Tibial artery (tissue), 4 donors: ENCODE measurements at regions of chr2 and their contacts with region 1.

Region 1: DNA sequence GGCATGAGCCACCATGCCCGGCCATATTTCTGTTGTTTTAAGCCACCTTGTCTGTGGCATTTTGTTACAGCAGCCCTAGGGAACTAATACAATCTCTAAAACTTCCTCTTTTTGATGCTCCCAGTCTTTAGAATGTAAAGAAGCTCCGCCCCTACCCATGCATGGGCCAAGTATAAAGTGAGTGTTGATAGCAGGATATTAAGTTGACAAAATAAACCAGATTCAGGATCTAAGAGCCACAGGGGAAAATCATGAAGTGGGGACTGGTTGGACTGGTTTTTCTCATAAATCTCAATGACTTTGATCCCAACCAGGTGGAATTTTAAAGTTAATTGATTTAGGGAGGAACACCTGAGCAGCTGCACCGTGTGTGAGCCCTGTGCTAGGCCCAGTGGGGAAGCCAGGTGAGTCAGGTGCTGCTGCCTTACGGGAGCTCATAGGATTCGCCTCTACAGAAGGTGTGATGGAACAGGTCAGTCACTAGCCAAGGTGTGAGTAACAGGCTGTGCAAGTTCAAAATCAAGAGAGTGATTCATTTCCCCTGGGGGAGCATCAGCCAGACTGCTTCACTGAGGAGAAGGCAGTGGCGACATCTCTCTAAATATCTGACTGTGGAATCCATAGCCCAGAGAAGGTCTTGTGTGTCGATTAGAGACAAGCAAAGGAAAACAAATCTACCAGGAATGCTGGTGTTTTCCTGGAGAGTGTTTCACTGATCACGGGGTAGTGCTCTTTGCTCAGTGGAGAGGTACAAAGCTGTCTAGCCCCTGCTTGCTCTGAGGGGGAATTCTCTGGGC is 63.0 kb upstream of the MSH2 start:
- DNase-seq: no peak
- H3K4me3 ChIP-seq: no peak overlapping the region
- H3K27ac ChIP-seq: no peak overlapping the region
- H3K4me1 ChIP-seq: peaks cover 0 to 9% (median 4%) of the 10 kb centered on the region in 4 donors
- H3K27me3 ChIP-seq: peaks cover 0 to 9% of the 10 kb centered on the region in 2 donors
- CTCF ChIP-seq: no peak

Region 2: GRCh38 chr2:47386551-47386950 is 46.6 kb after region 1 on chr2:
- intact Hi-C with region 1: loop called (anchors 5 kb)
- DNase-seq: no peak
- H3K4me3 ChIP-seq: no peak overlapping the region
- H3K27ac ChIP-seq: no peak overlapping the region
- H3K4me1 ChIP-seq: no peaks in the 10 kb centered on the region
- H3K27me3 ChIP-seq: peaks cover 0 to 3% of the 10 kb centered on the region in 2 donors
- CTCF ChIP-seq: no peak

Region 3: DNA sequence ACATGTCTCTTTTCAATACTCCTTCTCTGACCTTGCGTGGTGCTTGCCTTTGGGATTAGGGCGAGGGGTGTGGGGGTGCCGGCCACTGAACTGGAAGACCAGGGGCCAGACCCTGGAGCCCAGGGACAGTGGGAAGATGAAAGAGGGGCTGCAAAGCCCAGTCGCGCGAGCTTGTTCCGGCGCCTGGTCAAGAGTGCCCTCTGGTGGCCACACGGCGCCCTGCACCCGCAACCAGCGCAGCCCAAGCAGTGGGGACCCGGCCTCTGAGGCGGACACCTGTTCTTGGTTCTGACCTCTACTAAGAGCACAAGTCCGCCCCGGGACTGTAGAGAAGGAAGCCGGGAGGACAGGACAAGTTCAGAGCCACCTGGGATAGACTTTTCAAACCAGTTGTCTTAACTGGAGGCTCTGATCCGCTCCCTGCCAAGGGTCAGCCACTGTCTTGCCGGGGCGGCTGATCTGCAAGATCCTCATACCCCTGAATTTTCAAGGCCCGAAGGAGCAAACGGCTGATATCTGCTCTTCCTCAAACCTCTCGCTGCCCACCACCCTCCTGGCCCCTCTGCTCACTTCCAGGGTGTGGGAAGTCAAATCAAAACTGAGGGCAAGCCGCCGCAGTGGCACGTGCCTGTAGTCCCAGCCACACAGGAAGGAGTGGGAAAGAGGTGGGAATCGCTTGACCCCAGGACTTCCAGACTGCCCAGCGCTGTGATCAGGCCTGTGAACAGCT is 428.1 kb after region 1 on chr2:
- intact Hi-C with region 1: loop called (anchors 5 kb)
- DNase-seq: peak; percentile 43 to 75
- H3K4me3 ChIP-seq: no peak overlapping the region
- H3K27ac ChIP-seq: no peak overlapping the region
- H3K4me1 ChIP-seq: peaks cover 0 to 6% (median 3%) of the 10 kb centered on the region in 4 donors
- H3K27me3 ChIP-seq: no peaks in the 10 kb centered on the region
- CTCF ChIP-seq: peak; percentile 92 to 99